Heart left ventricle (tissue), 16 donors: ENCODE measurements at regions of chr21 and their contacts with region 1.

Region 1: DNA sequence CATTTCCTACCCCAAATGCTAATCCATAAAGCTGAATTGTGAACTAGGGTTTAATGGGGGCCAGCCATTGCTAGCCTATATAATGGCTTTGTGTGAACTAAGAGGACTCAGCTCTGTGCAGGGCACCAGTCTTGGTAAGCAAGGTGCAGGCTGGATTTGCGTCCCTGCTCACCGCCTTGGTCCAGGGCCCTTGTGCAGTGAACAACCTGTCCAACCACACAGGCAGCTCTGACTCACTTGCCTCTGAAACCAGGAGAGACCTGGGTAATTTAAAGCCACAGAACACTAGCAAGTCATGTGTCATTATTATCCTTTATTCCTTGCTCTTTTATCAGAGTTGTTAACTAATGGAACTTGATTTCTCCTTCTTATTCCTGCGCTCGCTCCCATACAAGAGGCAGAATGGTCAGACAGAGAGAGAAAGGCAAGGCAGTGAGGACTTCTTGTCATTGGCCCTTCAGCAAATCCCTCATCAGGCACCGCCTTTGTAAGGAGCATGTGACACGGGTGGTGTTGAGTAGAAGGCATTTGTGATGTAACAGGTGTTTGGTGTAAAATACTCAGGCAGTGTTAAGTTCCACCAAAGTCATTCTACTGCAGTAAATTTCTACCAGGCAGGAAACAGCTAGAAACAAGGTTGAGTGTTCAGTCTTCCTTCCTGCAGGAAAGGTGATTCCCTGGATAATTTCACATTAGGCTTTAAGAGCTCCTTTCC is 67.3 kb upstream of the OLIG2 start:
- DNase-seq: no peak
- ATAC-seq: no peak
- H3K4me3 ChIP-seq: no peak overlapping the region
- H3K27ac ChIP-seq: no peak overlapping the region
- H3K4me1 ChIP-seq: no peaks in the 10 kb centered on the region
- H3K27me3 ChIP-seq: peaks cover 0 to 79% (median 15%) of the 10 kb centered on the region in 9 donors
- CTCF ChIP-seq: no peak
- POLR2A ChIP-seq: no peak

Region 2: GRCh38 chr21:32894310-32894709 is 64.1 kb before region 1 on chr21:
- intact Hi-C with region 1: loop called in 1 of 10 experiments (anchors 10 kb)
- DNase-seq: no peak
- ATAC-seq: no peak
- H3K4me3 ChIP-seq: no peak overlapping the region
- H3K27ac ChIP-seq: no peak overlapping the region
- H3K4me1 ChIP-seq: no peaks in the 10 kb centered on the region
- H3K27me3 ChIP-seq: peaks cover 0 to 3% (median 0%) of the 10 kb centered on the region in 9 donors
- CTCF ChIP-seq: no peak
- POLR2A ChIP-seq: no peak